Naive thymus-derived CD8-positive, alpha-beta T cell (primary cell): ENCODE measurements at regions of chr22 and their contacts with region 1.

Region 1: DNA sequence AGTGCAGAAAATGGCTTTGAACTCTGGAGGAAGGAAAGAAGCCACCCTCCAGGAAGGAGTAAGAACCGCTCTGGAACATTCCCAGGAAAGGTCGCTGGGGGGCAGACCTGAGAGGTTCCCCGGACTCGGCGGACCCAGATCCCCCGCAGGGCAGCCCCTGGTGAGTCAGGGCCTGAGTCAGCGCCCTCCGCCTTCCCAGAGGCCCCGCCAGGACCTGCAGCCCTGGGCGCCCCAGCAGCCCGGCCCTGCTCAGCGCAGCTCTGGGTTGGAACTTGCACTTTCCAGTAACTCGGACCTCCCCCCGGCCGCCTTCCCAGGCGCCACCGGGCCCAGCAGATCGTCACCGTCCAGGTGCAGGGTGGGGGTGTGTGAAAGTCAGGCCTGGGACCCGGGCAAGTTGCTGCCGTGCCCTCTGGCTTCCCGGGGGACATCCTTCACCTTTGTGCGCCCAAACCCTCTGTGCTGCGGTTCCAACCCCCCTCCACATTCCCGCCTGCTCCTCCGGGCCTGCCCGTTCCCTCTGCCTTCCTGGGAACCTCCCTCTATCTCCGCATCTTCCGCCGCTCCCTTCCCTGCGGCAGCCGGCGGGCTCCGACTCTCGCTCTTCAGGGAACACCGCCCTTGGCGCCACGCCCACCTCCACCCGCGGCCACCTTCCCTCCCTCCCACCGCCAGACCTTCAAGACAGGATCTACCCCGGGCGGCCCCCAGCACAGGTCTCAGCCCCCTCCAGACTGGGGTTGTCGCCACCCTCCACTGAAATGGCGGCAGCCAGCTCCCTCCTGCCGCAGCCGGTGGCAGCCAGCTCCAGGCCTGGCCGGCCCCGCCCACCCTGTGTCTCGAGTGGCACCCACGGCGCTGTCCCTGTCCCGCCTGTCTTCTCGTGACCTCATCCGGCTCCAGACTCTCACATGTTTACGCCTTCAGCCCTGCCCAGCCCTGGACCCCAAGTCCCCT is 36.8 kb upstream of the WNT7B start:
- DNase-seq: peak; percentile 62 to 90 (median 71)
- ATAC-seq: peak; percentile 86 to 92
- H3K4me3 Mint-ChIP-seq: peak overlapping the region; percentile 85 to 95 (median 88)
- H3K27ac Mint-ChIP-seq: peak overlapping the region; percentile 73 to 95 (median 86)
- H3K4me1 Mint-ChIP-seq: peaks cover 5 to 22% (median 8%) of the 10 kb centered on the region in 4 donors
- H3K27me3 Mint-ChIP-seq: no peaks in the 10 kb centered on the region

Region 2: DNA sequence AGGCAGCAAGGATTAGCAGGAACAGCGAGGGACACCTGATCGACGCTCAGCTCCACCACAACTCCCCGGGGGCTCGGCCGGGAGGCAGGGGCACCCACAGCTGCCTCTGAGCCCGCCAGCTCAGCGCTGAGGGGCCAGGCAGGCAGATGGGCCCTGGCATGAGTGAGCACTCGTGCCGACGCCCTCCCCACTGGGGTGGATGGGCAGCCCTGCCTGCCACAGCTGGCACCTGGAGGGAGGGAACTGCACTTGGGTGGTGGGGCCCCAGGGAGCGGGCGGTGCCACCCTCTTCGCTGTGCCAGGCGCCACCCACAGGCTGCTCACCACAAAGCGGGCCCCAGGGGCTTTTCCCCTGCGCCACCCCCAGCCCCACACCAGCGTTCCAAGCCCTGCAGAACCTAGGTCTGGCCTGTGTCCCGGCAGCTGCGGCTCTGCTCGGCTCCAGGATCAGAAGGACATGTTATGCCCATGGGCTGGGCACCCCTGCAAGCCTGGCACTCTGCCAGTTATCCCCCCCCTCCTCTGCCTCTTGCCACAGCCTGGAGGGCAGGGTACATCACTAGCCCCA is 65.6 kb before region 1 on chr22:
- POLR2A ChIA-PET with region 1: no interaction called
- DNase-seq: no peak
- ATAC-seq: peak in 1 of 2 donors; percentile 33
- H3K4me3 Mint-ChIP-seq: no peak overlapping the region
- H3K27ac Mint-ChIP-seq: no peak overlapping the region
- H3K4me1 Mint-ChIP-seq: peaks cover 0 to 7% (median 5%) of the 10 kb centered on the region in 4 donors
- H3K27me3 Mint-ChIP-seq: peaks cover 4 to 32% (median 14%) of the 10 kb centered on the region in 5 donors

Region 3: GRCh38 chr22:46044621-46045438 is 31.1 kb after region 1 on chr22:
- POLR2A ChIA-PET with region 1: interaction called, 32 read pairs
- DNase-seq: peak in 7 of 10 donors; percentile 18 to 55 (median 38)
- ATAC-seq: peak; percentile 73 to 84
- H3K4me3 Mint-ChIP-seq: peak overlapping the region; percentile 81 to 92 (median 86)
- H3K27ac Mint-ChIP-seq: peak overlapping the region; percentile 78 to 96 (median 92)
- H3K4me1 Mint-ChIP-seq: peaks cover 6 to 50% (median 25%) of the 10 kb centered on the region in 4 donors
- H3K27me3 Mint-ChIP-seq: no peaks in the 10 kb centered on the region

Region 4: DNA sequence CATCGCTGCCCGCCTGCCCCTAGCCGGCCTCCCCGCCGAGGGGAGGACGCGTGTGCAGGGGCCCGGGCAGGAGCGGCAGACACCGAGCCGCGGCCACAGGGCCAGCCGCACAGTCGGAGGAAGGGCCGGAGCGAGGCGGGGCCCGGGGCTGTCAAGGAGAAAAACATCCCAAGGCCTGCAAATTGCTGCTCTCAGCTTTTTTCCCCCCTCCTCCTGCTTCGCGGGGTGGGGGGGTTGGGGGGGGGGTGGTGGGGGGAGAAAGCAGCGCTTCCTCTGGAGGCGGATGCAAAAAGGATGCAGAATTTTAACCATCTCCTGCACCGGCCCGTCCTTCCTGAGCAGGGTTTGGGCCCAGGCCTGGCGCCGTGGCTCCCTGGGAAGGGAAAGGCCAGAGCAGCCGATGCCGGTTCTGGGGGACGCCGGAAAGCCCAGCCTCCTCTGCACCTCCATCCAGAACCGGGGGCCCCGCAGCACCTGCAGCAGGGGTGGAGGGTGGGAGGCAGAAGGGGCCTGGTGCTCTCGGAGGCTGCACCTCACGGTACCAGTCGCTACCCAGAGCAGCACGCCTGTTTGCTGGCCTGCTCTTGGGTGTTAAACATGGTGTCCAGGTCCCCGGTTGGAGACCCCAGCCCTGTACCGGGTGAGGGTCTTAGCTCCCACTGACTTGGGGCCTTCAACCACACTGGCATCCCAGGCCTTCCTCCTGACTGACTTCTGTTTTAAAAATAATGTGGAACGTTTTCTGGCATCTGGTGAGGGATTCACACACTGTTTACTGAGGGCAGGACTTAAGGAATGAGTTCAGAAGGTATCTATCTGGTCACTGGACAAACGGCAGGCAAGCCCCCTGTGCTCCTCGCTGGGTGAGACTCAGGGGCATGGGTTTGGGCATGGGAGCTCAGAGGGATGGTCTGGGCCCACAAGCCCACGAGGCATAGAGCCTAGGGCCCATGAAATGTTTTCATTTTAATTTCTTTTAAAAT is 40.6 kb after region 1 on chr22:
- POLR2A ChIA-PET with region 1: interaction called, 30 read pairs
- DNase-seq: peak in 8 of 10 donors; percentile 11 to 75 (median 46)
- ATAC-seq: peak; percentile 46 to 54
- H3K4me3 Mint-ChIP-seq: peak overlapping the region; percentile 78 to 94 (median 90)
- H3K27ac Mint-ChIP-seq: peak overlapping the region; percentile 91 to 99 (median 96)
- H3K4me1 Mint-ChIP-seq: peaks cover 17 to 81% (median 55%) of the 10 kb centered on the region in 4 donors
- H3K27me3 Mint-ChIP-seq: no peaks in the 10 kb centered on the region

Region 5: GRCh38 chr22:46116491-46116958 is 102.8 kb after region 1 on chr22:
- POLR2A ChIA-PET with region 1: interaction called, 11 read pairs
- DNase-seq: peak; percentile 73 to 93 (median 83)
- ATAC-seq: peak; percentile 96 to 98
- H3K4me3 Mint-ChIP-seq: no peak overlapping the region
- H3K27ac Mint-ChIP-seq: peak overlapping the region in 1 of 10 donors; percentile 50
- H3K4me1 Mint-ChIP-seq: peaks cover 0 to 5% (median 2%) of the 10 kb centered on the region in 4 donors
- H3K27me3 Mint-ChIP-seq: no peaks in the 10 kb centered on the region